HepG2 (cell line): ENCODE measurements at regions of chr4 and their contacts with region 1.

Region 1: DNA sequence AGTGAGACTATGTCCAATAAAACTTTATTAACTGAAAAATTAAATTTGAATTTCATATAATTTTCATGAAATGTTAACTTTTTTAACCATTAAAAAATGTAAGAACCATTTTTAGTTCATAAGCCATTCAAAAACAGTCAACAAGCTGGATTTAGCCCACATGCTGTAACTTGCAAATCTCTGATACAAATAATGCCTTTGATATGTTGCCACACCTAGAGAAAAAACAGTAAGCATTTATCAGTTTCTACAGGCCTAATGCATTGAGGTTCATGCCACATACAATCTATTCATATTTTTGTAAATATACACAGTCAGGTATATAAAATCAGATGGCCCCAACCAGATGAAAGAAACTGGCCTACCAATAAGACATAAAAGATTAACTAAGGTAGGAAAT is 52.8 kb downstream of the LCORL start:
- DNase-seq: no peak
- ATAC-seq: no peak
- H3K4me3 ChIP-seq: no peak overlapping the region
- H3K27ac ChIP-seq: no peak overlapping the region
- H3K4me1 ChIP-seq: no peaks in the 10 kb centered on the region
- H3K27me3 ChIP-seq: no peaks in the 10 kb centered on the region
- CTCF ChIP-seq: no peak
- EP300 ChIP-seq: no peak
- POLR2A ChIP-seq: no peak
- RAD21 ChIP-seq: no peak

Region 2: DNA sequence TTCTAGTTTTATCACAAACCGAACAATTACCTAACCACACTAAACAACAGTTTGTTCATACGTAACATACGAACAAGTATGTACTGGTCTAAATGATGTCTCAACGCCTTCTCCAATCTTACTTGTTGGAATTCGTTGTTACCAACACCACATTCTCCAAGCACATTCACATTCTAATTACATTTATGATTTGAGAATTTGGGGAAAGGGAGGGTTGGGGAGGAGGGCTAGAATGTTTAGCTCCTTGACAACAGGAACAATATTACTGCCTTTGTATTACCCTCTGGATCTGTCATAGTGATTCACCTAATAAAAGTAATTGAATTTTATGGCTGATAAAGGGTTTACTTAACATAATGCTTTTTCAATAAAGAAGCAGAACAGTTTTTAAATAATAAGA is 28.4 kb after region 1 on chr4:
- CTCF ChIA-PET with region 1: no interaction called
- POLR2A ChIA-PET with region 1: no interaction called
- in situ Hi-C with region 1: no loop called
- intact Hi-C with region 1: no loop called
- DNase-seq: no peak
- ATAC-seq: no peak
- H3K4me3 ChIP-seq: no peak overlapping the region
- H3K27ac ChIP-seq: no peak overlapping the region
- H3K4me1 ChIP-seq: peaks cover 9% of the 10 kb centered on the region; the same call in 1 of the 2 replicates
- H3K27me3 ChIP-seq: no peaks in the 10 kb centered on the region
- CTCF ChIP-seq: no peak
- EP300 ChIP-seq: no peak
- POLR2A ChIP-seq: no peak
- RAD21 ChIP-seq: no peak

Region 3: DNA sequence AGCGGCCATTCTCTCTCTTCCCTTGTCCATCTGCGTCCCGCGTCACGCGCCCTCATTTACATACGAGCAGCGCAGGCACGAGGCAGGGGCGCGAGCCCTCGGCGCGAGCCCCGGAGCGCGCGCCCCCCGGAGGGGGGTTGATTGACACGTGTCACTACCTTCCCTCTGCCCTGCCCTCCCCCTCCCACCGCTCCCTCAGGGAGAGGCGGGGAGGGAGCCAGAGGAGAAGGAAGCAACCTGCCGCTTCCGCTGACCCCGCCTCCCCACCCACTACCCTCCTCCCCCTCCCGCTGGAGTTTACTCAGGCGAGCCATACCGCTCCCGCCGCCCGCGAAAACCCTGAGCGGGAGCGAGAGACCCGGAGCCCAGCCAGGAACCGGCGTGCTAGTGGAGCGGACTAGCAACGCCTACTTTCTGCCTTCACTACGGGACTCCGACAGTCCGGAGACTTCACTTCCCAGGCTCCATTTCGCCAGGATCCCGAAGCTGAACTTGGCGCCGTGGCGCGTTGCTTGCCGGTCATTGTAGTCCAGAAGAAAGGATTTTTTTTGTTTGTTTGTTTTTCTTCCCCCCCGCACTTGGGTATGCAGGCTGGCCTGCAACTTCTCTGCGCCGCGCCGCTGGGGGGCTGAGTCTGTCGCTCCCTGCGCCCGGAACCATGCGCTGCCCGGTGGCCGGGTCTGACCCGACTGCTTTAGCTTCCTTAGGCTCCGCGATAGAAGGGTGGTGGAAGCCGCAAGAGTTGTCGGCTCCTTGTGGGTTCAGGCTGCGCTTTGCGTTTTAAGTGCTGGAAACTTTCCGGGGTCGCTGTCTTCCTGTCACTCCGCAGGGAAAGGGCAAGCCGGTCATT is 53.2 kb after region 1 on chr4 and contains the start of gene LCORL:
- CTCF ChIA-PET with region 1: no interaction called
- POLR2A ChIA-PET with region 1: no interaction called
- in situ Hi-C with region 1: no loop called
- intact Hi-C with region 1: loop called (anchors 5 kb)
- DNase-seq: peak; percentile 96
- ATAC-seq: peak; percentile 90
- H3K4me3 ChIP-seq: peak within 1 kb of the TSS; percentile 89 to 97 (median 93)
- H3K27ac ChIP-seq: peak within 1 kb of the TSS; percentile 96
- H3K4me1 ChIP-seq: peaks cover 21% of the 10 kb centered on the region
- H3K27me3 ChIP-seq: peaks cover 0 to 15% of the 10 kb centered on the region in 2 experiments; a peak in 1 of 5 replicates
- CTCF ChIP-seq: peak; percentile 66
- EP300 ChIP-seq: no peak
- POLR2A ChIP-seq: peak; percentile 19 to 57; a peak in 3 of 4 replicates
- RAD21 ChIP-seq: no peak
- total RNA-seq, gene LCORL: 14.5 and 16.5 TPM in 2 replicates

Region 4: GRCh38 chr4:18278244-18278643 is 309.5 kb after region 1 on chr4:
- CTCF ChIA-PET with region 1: no interaction called
- POLR2A ChIA-PET with region 1: no interaction called
- in situ Hi-C with region 1: no loop called
- intact Hi-C with region 1: no loop called
- DNase-seq: no peak
- ATAC-seq: no peak
- H3K4me3 ChIP-seq: no peak overlapping the region
- H3K27ac ChIP-seq: no peak overlapping the region
- H3K4me1 ChIP-seq: no peaks in the 10 kb centered on the region
- H3K27me3 ChIP-seq: no peaks in the 10 kb centered on the region
- CTCF ChIP-seq: no peak
- EP300 ChIP-seq: no peak
- POLR2A ChIP-seq: no peak
- RAD21 ChIP-seq: no peak